ENCODE measurements at regions of chr22 and their contacts with region 1.

Region 1: DNA sequence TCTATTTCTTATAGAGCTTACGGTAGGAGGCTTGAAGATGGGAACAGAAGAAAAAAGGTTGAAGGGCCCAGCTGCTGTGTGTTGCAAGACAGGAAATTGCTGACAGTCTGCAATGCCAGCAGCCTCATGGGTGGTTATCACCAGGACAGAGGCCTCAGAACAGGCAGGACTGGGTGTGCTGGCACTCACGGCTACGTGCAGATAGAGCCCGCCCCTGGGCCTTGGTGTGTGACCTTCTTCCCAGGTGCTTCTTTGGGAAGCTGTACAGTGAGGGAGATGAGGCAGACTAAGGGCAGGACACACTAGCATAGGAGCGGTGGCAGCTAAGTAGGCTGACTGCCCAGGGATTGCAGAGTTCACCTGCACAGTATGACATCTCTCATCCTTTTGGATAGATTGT is 12.6 kb downstream of the PRAME start:
- DNase-seq: peak; percentile 38 to 82 (median 77)
- H3K4me3 ChIP-seq: no peak overlapping the region
- H3K27ac ChIP-seq: no peak overlapping the region
- H3K4me1 ChIP-seq: peaks cover 0 to 24% (median 22%) of the 10 kb centered on the region in 4 experiments
- H3K27me3 ChIP-seq: no peaks in the 10 kb centered on the region

Region 2: DNA sequence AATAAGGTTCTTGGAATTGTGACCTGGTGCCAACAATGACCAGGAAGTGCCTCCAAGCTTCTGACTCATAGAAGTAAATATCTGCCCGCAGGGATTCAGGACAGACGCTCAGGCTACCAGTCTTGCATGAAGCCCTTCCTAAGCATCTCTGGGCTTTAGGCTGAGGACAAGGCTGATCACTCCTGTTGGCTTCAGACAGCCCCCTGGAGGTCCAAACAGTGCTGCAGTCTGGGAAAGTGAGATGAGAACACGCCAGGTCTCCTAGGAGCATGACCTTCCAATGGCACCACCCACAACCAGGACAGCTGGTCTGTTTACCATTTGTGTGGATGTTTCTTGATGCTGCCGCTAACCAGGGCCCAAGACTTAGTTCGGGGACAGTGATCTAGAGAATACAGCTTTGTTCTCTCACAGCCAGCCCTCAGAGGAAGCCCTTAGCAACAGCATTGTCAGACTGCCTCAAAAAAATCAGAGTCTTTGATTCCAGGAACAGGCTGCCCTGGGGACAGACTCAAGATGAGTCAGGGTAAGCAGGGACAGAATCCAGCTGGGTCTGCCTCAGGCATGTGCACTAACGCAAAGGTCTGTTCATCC is 149.1 kb before region 1 on chr22:
- CTCF ChIA-PET with region 1: no interaction called
- POLR2A ChIA-PET with region 1: no interaction called
- DNase-seq: no peak
- H3K4me3 ChIP-seq: no peak overlapping the region
- H3K27ac ChIP-seq: no peak overlapping the region
- H3K4me1 ChIP-seq: peaks cover 0 to 3% (median 2%) of the 10 kb centered on the region in 4 experiments
- H3K27me3 ChIP-seq: peaks cover 0 to 10% (median 0%) of the 10 kb centered on the region in 5 experiments

Region 3: DNA sequence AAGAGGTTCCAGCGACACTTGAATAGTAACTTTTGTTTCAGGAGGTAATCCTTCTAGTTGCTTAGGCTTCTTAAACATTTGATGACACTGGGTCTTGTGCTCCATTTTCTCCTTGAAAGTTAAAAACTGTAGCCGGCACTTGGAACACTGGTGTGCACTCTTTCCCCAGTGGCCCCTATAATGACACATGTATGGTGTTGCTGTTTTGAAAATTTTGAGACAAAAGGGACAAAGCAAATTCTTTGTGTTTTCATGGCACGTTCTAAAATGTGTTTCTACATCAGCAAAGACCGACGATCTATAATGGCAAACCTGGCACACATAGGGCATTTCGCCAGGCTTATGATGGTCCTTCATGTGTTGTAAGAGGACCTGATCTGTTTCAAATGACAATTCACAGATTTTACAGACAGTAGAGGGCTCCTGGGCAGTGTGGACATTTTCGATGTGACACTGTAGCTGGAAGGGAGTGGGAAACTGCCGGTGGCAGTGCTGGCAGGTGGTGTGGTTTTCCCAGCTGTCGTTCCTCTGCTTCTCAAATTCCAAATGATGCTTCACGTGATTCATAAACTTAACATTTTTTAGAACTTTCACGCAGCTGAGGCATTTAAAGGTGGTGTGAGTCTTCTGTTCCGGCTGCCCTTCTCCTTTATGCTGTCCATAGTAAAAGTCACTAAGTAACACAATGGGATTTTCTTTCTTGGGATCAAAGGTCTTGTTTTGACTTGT is 58.5 kb before region 1 on chr22:
- CTCF ChIA-PET with region 1: no interaction called
- POLR2A ChIA-PET with region 1: no interaction called
- DNase-seq: no peak
- H3K4me3 ChIP-seq: no peak overlapping the region
- H3K27ac ChIP-seq: no peak overlapping the region
- H3K4me1 ChIP-seq: no peaks in the 10 kb centered on the region
- H3K27me3 ChIP-seq: no peaks in the 10 kb centered on the region

Region 4: DNA sequence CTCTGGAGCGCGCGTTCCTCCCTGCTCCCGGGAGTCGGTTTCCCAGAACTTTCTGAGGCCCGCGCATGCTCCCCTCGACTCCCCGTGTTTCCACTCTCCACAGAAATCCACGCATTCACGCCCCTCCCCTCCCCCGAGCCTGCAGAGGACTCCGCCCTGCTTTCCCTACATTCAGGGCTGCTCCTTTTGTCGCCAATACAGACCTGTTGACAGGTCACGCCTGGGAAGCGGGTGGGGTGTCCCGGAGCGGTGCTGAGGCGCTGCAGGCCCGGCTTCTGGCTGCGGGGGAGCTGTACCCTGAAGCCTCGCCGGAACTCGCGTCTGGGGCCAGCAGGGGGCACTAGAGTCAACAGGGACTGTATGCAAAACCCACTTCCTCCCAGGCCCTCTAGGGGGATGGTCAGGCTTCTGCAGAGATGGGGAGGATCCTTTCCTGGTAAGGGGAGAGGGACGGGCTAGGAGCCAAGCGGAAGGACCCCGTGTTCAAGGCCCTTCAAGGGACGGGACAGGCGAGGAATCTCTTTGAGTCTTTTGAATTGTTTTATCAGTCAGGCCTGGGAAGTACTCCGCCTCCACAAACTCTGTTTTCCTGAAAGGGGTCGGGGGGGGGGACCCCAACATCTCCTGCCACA is 12.6 kb after region 1 on chr22 and contains the start of gene PRAME:
- CTCF ChIA-PET with region 1: interaction called, 10 read pairs
- POLR2A ChIA-PET with region 1: no interaction called
- DNase-seq: peak; percentile 84 to 91 (median 88)
- H3K4me3 ChIP-seq: no peak within 1 kb of the TSS
- H3K27ac ChIP-seq: peak within 1 kb of the TSS in 1 of 2 experiments; percentile 93
- H3K4me1 ChIP-seq: peaks cover 0 to 2% (median 0%) of the 10 kb centered on the region in 4 experiments
- H3K27me3 ChIP-seq: no peaks in the 10 kb centered on the region

Region 5: GRCh38 chr22:24087071-24087795 is 1540.7 kb after region 1 on chr22:
- CTCF ChIA-PET with region 1: no interaction called
- POLR2A ChIA-PET with region 1: no interaction called
- DNase-seq: no peak
- H3K4me3 ChIP-seq: no peak overlapping the region
- H3K27ac ChIP-seq: no peak overlapping the region
- H3K4me1 ChIP-seq: no peaks in the 10 kb centered on the region
- H3K27me3 ChIP-seq: no peaks in the 10 kb centered on the region

Measured in common myeloid progenitor, CD34-positive (primary cell).